B cell (primary cell): ENCODE measurements at regions of chr14 and their contacts with region 1.

Region 1: DNA sequence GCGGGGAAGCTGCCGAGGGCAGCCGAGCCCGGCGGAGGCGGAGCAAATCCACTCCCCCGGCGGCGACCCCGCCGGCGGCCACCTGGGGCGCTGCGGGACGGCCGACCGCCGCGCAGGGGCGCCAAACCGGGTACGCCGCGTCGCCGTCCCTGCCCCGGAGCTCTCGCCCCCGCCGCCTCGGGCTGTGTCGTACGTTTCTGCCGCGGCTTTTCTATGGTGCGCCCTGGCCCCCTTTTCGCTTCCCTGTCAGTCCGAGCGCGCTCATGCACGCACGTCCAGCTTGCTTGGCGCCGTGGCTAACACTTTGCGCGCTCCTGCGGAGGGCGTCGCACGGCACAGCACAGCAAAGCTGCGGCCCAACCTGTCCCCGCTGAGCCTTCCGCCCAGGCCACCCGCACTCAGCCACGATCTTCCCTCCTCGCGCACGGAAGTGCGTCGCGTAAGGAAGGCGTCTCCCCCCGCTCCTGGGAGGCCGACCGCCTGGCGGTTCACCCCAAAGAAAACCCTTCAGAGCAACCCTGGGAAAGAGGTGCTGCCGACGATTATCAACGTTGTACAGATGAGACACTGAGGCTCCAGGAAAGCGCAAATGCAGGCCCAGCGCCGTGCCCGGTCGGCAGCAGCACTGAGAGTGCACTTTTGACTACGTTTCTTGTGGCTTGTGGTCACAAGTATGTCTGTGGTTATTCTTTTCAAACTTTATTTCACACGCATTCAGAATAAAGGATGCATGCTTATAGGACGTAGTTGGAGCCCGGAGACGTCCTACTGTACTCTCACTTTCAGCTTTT is at the start of gene HECTD1:
- DNase-seq: peak; percentile 95
- ATAC-seq: peak; percentile 83
- H3K4me3 ChIP-seq: peak within 1 kb of the TSS; percentile 75 to 90 (median 83)
- H3K4me3 Mint-ChIP-seq: peak within 1 kb of the TSS; percentile 99
- H3K27ac ChIP-seq: peak within 1 kb of the TSS; percentile 94 to 97
- H3K27ac Mint-ChIP-seq: peak within 1 kb of the TSS; percentile 99
- H3K4me1 ChIP-seq: peaks cover 21 to 27% of the 10 kb centered on the region in 2 donors
- H3K4me1 Mint-ChIP-seq: peaks cover 37% of the 10 kb centered on the region
- H3K27me3 ChIP-seq: no peaks in the 10 kb centered on the region
- H3K27me3 Mint-ChIP-seq: no peaks in the 10 kb centered on the region
- CTCF ChIP-seq: peak; percentile 97
- total RNA-seq, gene HECTD1: 184 and 199 TPM in 2 replicates

Region 2: DNA sequence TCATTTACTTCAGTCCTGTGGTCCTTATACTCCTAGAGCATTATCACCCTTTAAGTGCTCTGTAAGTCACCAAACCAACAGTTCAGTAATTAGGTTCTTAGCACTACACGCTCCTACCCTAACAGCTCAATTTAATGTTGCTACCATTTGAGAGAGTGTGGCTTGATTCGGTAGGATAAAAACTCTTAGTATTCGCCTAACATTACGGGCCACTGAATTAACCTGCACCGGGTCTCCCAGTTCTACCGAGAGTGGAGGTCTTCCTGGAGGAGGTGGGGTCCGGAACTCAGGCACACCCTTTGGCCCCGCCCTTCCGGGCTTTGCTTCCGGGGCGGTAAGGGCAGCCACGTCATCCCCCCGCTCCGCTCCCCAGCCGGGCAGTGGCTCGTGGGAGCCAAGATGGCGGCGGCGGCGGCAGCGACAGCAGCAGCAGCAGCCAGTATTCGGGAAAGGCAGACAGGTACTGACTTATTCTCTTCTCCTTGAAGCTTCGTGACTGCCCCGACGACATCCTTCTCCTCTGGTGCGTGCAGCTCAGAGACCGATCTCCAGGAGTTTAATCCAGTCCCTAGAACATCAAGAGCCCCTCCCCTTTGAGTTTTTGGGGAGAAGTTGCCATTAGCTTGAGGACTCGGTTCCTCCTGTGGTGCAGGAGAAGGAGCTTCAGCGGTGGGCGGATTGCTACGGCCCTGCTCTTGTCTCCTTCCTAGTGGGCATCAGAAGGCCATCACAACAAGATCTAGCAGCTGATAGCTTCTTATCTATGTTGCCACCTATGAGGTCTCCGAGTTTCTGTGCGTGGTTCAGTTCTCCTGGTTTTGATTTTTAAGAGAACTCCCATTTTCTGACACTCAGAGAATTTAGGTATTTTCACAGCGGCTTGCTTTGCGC is 585.8 kb before region 1 on chr14 and contains the start of gene SCFD1:
- CTCF ChIA-PET with region 1: interaction called, 4 read pairs
- POLR2A ChIA-PET with region 1: interaction called, 3 read pairs
- intact Hi-C with region 1: loop called (anchors 2 kb)
- DNase-seq: peak; percentile 94
- ATAC-seq: peak; percentile 98
- H3K4me3 ChIP-seq: peak within 1 kb of the TSS; percentile 78 to 98 (median 88)
- H3K4me3 Mint-ChIP-seq: peak within 1 kb of the TSS; percentile 98
- H3K27ac ChIP-seq: peak within 1 kb of the TSS; percentile 82 to 94
- H3K27ac Mint-ChIP-seq: peak within 1 kb of the TSS; percentile 98
- H3K4me1 ChIP-seq: peaks cover 14 to 28% of the 10 kb centered on the region in 2 donors
- H3K4me1 Mint-ChIP-seq: peaks cover 47% of the 10 kb centered on the region
- H3K27me3 ChIP-seq: no peaks in the 10 kb centered on the region
- H3K27me3 Mint-ChIP-seq: no peaks in the 10 kb centered on the region
- CTCF ChIP-seq: no peak
- total RNA-seq, gene SCFD1: 73.0 and 79.0 TPM in 2 replicates

Region 3: GRCh38 chr14:31026395-31027118 is 181.4 kb before region 1 on chr14:
- CTCF ChIA-PET with region 1: interaction called, 10 read pairs
- POLR2A ChIA-PET with region 1: interaction called, 9 read pairs
- intact Hi-C with region 1: loop called (anchors 1 kb)
- DNase-seq: peak; percentile 95
- ATAC-seq: peak; percentile 94
- H3K4me3 ChIP-seq: peak overlapping the region; percentile 85 to 98 (median 93)
- H3K4me3 Mint-ChIP-seq: peak overlapping the region; percentile 97
- H3K27ac ChIP-seq: peak overlapping the region; percentile 71 to 93
- H3K27ac Mint-ChIP-seq: peak overlapping the region; percentile 93
- H3K4me1 ChIP-seq: peaks cover 15 to 17% of the 10 kb centered on the region in 2 donors
- H3K4me1 Mint-ChIP-seq: peaks cover 40% of the 10 kb centered on the region
- H3K27me3 ChIP-seq: no peaks in the 10 kb centered on the region
- H3K27me3 Mint-ChIP-seq: no peaks in the 10 kb centered on the region
- CTCF ChIP-seq: no peak

Region 4: DNA sequence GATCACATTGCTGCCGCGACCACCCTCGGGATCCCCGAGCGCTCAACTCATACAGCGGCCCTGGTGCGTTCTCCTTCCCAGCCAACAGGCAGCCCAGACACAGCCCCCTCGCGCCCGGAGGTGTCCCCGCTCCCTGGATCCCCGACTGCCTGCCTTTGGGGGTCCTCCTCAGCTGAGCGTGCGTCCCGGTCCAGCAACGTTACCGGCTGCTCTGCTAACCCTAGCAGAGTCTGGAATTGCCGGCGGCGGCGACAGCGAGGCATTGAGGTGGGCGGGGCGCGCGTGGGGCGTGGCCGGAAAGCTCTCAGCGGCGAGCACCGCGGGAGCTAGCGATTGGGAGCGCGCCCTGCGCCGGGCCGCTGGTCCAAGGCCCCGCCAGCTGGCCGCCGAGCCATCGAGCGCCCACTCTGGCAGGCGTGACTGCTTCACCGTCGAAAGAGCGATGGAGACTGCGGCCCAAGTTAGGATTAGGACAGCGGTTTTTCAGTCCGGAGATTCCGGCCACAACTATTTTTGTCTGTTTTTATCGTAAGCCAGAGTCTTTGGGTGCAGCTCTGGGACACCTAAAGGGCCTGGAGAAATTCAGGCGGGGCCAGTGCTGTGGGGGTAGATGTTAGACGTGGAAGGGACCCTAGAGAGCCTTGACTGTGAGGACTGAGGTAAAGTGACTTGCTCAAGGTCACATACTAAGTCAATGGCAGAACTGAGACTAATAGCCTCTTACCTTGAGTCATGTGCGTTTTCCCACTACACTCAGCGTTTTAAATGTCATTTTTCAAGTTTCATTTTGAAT is 212.6 kb after region 1 on chr14 and contains the start of gene HEATR5A:
- CTCF ChIA-PET with region 1: interaction called, 3 read pairs
- POLR2A ChIA-PET with region 1: interaction called, 15 read pairs
- intact Hi-C with region 1: loop called (anchors 1 kb)
- DNase-seq: peak; percentile 95
- ATAC-seq: peak; percentile 97
- H3K4me3 ChIP-seq: peak within 1 kb of the TSS; percentile 62 to 100 (median 95)
- H3K4me3 Mint-ChIP-seq: peak within 1 kb of the TSS; percentile 96
- H3K27ac ChIP-seq: peak within 1 kb of the TSS; percentile 30 to 75
- H3K27ac Mint-ChIP-seq: peak within 1 kb of the TSS; percentile 93
- H3K4me1 ChIP-seq: peaks cover 10 to 12% of the 10 kb centered on the region in 2 donors
- H3K4me1 Mint-ChIP-seq: peaks cover 26% of the 10 kb centered on the region
- H3K27me3 ChIP-seq: no peaks in the 10 kb centered on the region
- H3K27me3 Mint-ChIP-seq: no peaks in the 10 kb centered on the region
- CTCF ChIP-seq: peak; percentile 31
- total RNA-seq, gene HEATR5A: 19.1 and 22.1 TPM in 2 replicates

Region 5: GRCh38 chr14:31561155-31561846 is 353.4 kb after region 1 on chr14 and contains the start of gene NUBPL:
- CTCF ChIA-PET with region 1: no interaction called
- POLR2A ChIA-PET with region 1: no interaction called
- intact Hi-C with region 1: loop called (anchors 2 kb)
- DNase-seq: peak; percentile 98
- ATAC-seq: peak; percentile 96
- H3K4me3 ChIP-seq: peak within 1 kb of the TSS; percentile 67 to 92 (median 84)
- H3K4me3 Mint-ChIP-seq: peak within 1 kb of the TSS; percentile 93
- H3K27ac ChIP-seq: peak within 1 kb of the TSS; percentile 62 to 94
- H3K27ac Mint-ChIP-seq: peak within 1 kb of the TSS; percentile 97
- H3K4me1 ChIP-seq: peaks cover 16 to 17% of the 10 kb centered on the region in 2 donors
- H3K4me1 Mint-ChIP-seq: peaks cover 25% of the 10 kb centered on the region
- H3K27me3 ChIP-seq: peaks cover 0 to 8% (median 3%) of the 10 kb centered on the region in 4 experiments
- H3K27me3 Mint-ChIP-seq: peaks cover 7% of the 10 kb centered on the region
- CTCF ChIP-seq: no peak
- total RNA-seq, gene NUBPL: 14.2 and 15.5 TPM in 2 replicates